ENCODE measurements at regions of chr2 and their contacts with region 1.

Region 1: GRCh38 chr2:203279305-203279704 is 40.5 kb downstream of the CYP20A1 start:
- DNase-seq: no peak
- H3K4me3 ChIP-seq: no peak overlapping the region
- H3K27ac ChIP-seq: no peak overlapping the region
- H3K4me1 ChIP-seq: peaks cover 8 to 11% of the 10 kb centered on the region in 2 donors
- H3K27me3 ChIP-seq: no peaks in the 10 kb centered on the region
- CTCF ChIP-seq: no peak
- POLR2A ChIP-seq: no peak

Region 2: DNA sequence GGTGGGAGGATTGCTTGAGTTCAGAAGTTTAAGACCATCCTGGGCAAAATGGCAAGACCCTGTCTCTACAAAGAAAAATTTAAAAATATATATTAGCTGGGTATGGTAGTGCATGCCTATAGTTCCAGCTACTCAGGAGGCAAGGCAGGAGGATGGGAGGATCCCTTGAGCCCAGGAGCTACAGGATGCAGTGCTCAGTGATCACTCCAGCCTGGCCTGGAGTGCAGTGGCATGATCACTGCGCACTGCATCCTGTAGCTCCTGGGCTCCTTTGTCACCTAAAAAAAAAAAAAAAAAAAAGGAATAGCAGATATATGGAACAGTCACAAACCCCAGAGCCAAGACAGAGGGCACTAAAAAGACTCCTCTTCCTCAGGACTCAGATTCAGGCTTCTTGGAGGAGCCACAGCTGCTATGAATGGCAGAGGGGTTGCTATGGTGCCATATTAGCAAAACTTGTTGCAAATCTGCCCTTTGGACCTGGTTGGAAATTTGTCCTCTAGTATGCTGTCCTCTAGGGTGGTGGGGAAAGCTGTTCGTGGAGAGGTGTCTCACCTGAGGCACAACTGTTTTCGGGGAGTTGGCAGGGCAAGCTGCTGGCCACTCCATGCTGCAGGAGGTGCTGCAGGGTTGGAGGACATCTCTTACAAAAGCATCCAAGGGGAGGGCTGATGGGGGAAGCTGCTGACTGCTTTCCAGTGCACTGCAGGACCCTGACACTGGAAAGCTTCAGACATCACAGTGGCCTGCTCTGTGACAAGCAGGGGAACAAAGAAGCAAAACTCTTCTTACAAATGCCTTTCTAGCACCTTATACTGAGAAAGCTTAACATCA is 17.8 kb before region 1 on chr2:
- intact Hi-C with region 1: loop called in 1 of 2 experiments (anchors 2 kb)
- DNase-seq: no peak
- H3K4me3 ChIP-seq: no peak overlapping the region
- H3K27ac ChIP-seq: no peak overlapping the region
- H3K4me1 ChIP-seq: peaks cover 0 to 20% of the 10 kb centered on the region in 2 donors
- H3K27me3 ChIP-seq: no peaks in the 10 kb centered on the region
- CTCF ChIP-seq: no peak
- POLR2A ChIP-seq: no peak

Region 3: GRCh38 chr2:203396667-203397066 is 117.4 kb after region 1 on chr2:
- intact Hi-C with region 1: no loop called
- DNase-seq: no peak
- H3K4me3 ChIP-seq: no peak overlapping the region
- H3K27ac ChIP-seq: no peak overlapping the region
- H3K4me1 ChIP-seq: no peaks in the 10 kb centered on the region
- H3K27me3 ChIP-seq: no peaks in the 10 kb centered on the region
- CTCF ChIP-seq: peak in 1 of 6 experiments; percentile 3
- POLR2A ChIP-seq: no peak

Measured in adrenal gland (tissue), 19 donors.